Heart left ventricle (tissue), 16 donors: ENCODE measurements at regions of chr6 and their contacts with region 1.

Region 1: DNA sequence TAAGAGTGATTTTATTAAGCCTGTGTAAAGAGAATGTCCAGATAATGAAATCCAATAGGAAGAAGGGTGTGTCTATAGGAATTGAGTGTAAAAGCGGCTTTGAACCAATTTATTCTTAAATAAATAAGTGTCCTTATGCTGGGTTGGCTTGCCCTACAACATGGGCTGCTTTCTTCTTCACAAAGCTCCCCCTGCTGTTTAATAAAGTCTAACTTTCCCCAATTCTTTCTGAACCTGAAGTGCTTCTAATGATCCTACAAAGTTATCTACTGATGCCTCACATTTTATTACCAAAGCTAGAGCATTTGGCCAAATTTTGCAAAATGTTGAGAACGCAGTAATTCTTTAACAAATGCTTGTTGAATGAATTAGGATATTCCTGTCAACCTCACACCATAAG is 36.3 kb upstream of the SIRT5 start:
- DNase-seq: no peak
- ATAC-seq: peak; percentile 55 to 78 (median 76)
- H3K4me3 ChIP-seq: no peak overlapping the region
- H3K27ac ChIP-seq: peak overlapping the region in 10 of 12 donors; percentile 8 to 73 (median 37)
- H3K4me1 ChIP-seq: peaks cover 0 to 24% (median 13%) of the 10 kb centered on the region in 12 donors
- H3K27me3 ChIP-seq: no peaks in the 10 kb centered on the region
- CTCF ChIP-seq: peak; percentile 38 to 73 (median 60)
- POLR2A ChIP-seq: no peak

Region 2: GRCh38 chr6:13407709-13408695 is 130.1 kb before region 1 on chr6:
- intact Hi-C with region 1: loop called in 4 of 10 experiments (anchors 5 to 10 kb)
- DNase-seq: no peak
- ATAC-seq: peak in 3 of 4 donors; percentile 36 to 63 (median 38)
- H3K4me3 ChIP-seq: no peak overlapping the region
- H3K27ac ChIP-seq: peak overlapping the region; percentile 42 to 93 (median 78)
- H3K4me1 ChIP-seq: peaks cover 22 to 96% (median 84%) of the 10 kb centered on the region in 12 donors
- H3K27me3 ChIP-seq: no peaks in the 10 kb centered on the region
- CTCF ChIP-seq: no peak
- POLR2A ChIP-seq: peak in 1 of 2 donors; percentile 17

Region 3: DNA sequence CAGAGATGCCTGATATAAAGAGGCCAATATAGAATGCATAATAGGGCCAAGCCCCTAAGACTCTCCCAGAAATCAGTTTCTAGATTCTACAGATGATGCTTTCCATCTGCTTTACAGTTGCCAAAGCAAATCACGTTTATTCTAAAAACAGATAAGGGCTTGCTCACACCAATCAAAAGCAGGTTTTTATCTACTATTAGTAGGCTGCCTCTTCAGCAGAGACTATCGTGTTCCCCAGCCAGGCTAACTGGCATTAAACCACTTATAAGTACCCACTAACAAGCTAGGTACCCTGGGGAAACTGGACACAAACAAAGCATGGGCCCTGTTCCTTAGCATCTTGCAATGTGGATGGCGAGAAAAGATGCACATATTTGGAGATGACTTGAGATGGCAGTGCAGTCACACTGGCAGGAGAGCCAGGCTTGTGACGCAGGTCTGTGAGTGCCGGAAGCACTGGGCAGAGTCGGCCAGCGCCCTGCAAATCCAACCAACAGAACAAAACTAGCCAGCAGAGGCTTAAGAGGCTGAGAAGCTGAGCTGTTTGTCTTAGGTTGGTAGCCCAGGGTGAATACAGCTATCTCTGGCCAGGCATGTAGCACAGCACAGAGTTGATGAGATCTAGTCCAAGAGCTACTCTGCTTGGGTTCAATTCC is 124.1 kb before region 1 on chr6:
- intact Hi-C with region 1: loop called in 4 of 10 experiments (anchors 5 to 10 kb)
- DNase-seq: peak in 4 of 5 donors; percentile 57 to 86 (median 70)
- ATAC-seq: peak; percentile 75 to 84 (median 80)
- H3K4me3 ChIP-seq: no peak overlapping the region
- H3K27ac ChIP-seq: peak overlapping the region; percentile 61 to 93 (median 76)
- H3K4me1 ChIP-seq: peaks cover 7 to 96% (median 76%) of the 10 kb centered on the region in 12 donors
- H3K27me3 ChIP-seq: no peaks in the 10 kb centered on the region
- CTCF ChIP-seq: peak in 1 of 12 donors; percentile 33
- POLR2A ChIP-seq: no peak

Region 4: GRCh38 chr6:13422681-13423221 is 115.3 kb before region 1 on chr6:
- intact Hi-C with region 1: loop called in 2 of 10 experiments (anchors 5 to 10 kb)
- DNase-seq: peak in 1 of 5 donors; percentile 39
- ATAC-seq: peak in 3 of 4 donors; percentile 32 to 46 (median 32)
- H3K4me3 ChIP-seq: no peak overlapping the region
- H3K27ac ChIP-seq: peak overlapping the region; percentile 1 to 88 (median 72)
- H3K4me1 ChIP-seq: peaks cover 33 to 100% (median 92%) of the 10 kb centered on the region in 12 donors
- H3K27me3 ChIP-seq: no peaks in the 10 kb centered on the region
- CTCF ChIP-seq: no peak
- POLR2A ChIP-seq: no peak

Region 5: DNA sequence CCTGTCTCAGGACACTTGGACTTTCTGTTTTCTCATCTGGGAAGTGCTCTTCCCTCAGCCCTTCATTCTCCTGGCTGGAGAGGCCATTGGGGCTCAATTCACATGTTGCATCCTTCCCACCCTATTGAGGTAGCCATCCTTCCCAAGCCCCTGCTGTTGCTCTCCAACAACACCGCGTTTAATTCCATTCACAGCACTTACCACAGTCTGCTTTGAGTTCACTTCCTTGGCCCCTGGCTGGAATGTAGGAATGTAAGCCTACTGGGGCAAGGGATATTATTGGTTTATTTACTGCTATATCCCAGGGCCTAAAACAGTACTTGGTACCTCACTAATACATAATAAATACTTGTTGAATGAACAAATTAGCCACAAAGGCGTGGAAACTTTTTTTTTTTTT is 43.9 kb before region 1 on chr6:
- intact Hi-C with region 1: loop called in 4 of 10 experiments (anchors 5 kb)
- DNase-seq: no peak
- ATAC-seq: no peak
- H3K4me3 ChIP-seq: no peak overlapping the region
- H3K27ac ChIP-seq: peak overlapping the region in 7 of 12 donors; percentile 53 to 76 (median 69)
- H3K4me1 ChIP-seq: peaks cover 0 to 27% (median 11%) of the 10 kb centered on the region in 12 donors
- H3K27me3 ChIP-seq: no peaks in the 10 kb centered on the region
- CTCF ChIP-seq: no peak
- POLR2A ChIP-seq: no peak

Region 6: GRCh38 chr6:13500264-13500663 is 37.8 kb before region 1 on chr6:
- intact Hi-C with region 1: loop called in 2 of 10 experiments (anchors 2 to 5 kb)
- DNase-seq: no peak
- ATAC-seq: no peak
- H3K4me3 ChIP-seq: no peak overlapping the region
- H3K27ac ChIP-seq: no peak overlapping the region
- H3K4me1 ChIP-seq: peaks cover 0 to 27% (median 12%) of the 10 kb centered on the region in 12 donors
- H3K27me3 ChIP-seq: no peaks in the 10 kb centered on the region
- CTCF ChIP-seq: no peak
- POLR2A ChIP-seq: no peak